ENCODE measurements at regions of chr12 and their contacts with region 1.

Region 1: GRCh38 chr12:83404521-83404920 is 717.8 kb downstream of the TMTC2 start:
- DNase-seq: no peak
- H3K4me3 ChIP-seq: no peak overlapping the region
- H3K27ac ChIP-seq: no peak overlapping the region
- H3K4me1 ChIP-seq: no peaks in the 10 kb centered on the region
- H3K27me3 ChIP-seq: no peaks in the 10 kb centered on the region
- CTCF ChIP-seq: no peak
- POLR2A ChIP-seq: no peak

Region 2: GRCh38 chr12:82034769-82035168 is 1369.8 kb before region 1 on chr12:
- intact Hi-C with region 1: loop called (anchors 5 kb)
- DNase-seq: no peak
- H3K4me3 ChIP-seq: no peak overlapping the region
- H3K27ac ChIP-seq: no peak overlapping the region
- H3K4me1 ChIP-seq: no peaks in the 10 kb centered on the region
- H3K27me3 ChIP-seq: no peaks in the 10 kb centered on the region
- CTCF ChIP-seq: no peak
- POLR2A ChIP-seq: no peak